K562 (cell line): ENCODE measurements at regions of chr12 and their contacts with region 1.

Region 1: GRCh38 chr12:54337280-54337842 is 12.4 kb downstream of the COPZ1 start:
- DNase-seq: peak; percentile 34 to 88 (median 60)
- ATAC-seq: peak; percentile 86
- H3K4me3 ChIP-seq: 0 out of 2 replicates have a peak overlapping the region, but pooled peaks have one; percentile 2
- H3K27ac ChIP-seq: peak overlapping the region; percentile 74
- H3K4me1 ChIP-seq: peaks cover 34 to 39% of the 10 kb centered on the region in 2 experiments
- H3K27me3 ChIP-seq: no peaks in the 10 kb centered on the region
- CTCF ChIP-seq: peak; percentile 42 to 71 (median 67); a peak in 4 of 6 replicates
- EP300 ChIP-seq: peak; percentile 88; the same call in 1 of the 2 replicates
- POLR2A ChIP-seq: peak; percentile 41
- RAD21 ChIP-seq: peak; percentile 67 to 78

Region 2: DNA sequence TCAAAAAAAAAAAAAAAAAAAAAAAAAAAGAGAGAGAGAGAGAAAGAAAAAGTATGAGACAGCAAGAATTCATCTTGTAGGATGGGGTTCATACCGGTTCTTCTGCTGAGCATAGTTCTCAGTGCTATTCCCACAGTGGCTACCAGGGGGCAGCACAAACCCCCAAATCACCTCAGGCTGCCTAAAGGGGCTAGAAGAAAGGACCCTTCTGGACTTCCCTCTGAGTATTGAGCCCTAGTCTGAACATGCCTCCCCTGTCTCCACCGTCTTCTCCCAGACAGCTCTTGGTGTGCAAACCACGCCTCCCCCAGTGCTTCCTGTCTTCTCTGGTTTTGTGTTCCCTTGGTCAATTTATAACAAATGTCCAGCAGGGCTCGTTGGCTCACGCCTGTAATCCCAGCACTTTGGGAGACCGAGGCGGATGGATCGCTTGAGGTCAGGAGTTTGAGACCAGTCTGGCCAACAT is 117.2 kb before region 1 on chr12:
- CTCF ChIA-PET with region 1: no interaction called
- POLR2A ChIA-PET with region 1: no interaction called
- in situ Hi-C with region 1: no loop called
- intact Hi-C with region 1: loop called (anchors 1 kb)
- DNase-seq: peak; percentile 75 to 88 (median 78)
- ATAC-seq: peak; percentile 81
- H3K4me3 ChIP-seq: no peak overlapping the region
- H3K27ac ChIP-seq: peak overlapping the region; percentile 66
- H3K4me1 ChIP-seq: peaks cover 29 to 34% of the 10 kb centered on the region in 2 experiments; a peak in 4 of 5 replicates
- H3K27me3 ChIP-seq: no peaks in the 10 kb centered on the region
- CTCF ChIP-seq: peak; percentile 91 to 94 (median 93)
- EP300 ChIP-seq: no peak
- POLR2A ChIP-seq: no peak
- RAD21 ChIP-seq: peak; percentile 95 to 98

Region 3: GRCh38 chr12:54285150-54286041 is 52.0 kb before region 1 on chr12:
- CTCF ChIA-PET with region 1: no interaction called
- POLR2A ChIA-PET with region 1: interaction called, 103 read pairs
- in situ Hi-C with region 1: no loop called
- intact Hi-C with region 1: no loop called
- DNase-seq: peak in 1 of 4 experiments; percentile 10
- ATAC-seq: peak; percentile 0; the same call in 1 of the 3 replicates
- H3K4me3 ChIP-seq: peak overlapping the region; percentile 71
- H3K27ac ChIP-seq: peak overlapping the region; percentile 75
- H3K4me1 ChIP-seq: peaks cover 22 to 31% of the 10 kb centered on the region in 2 experiments; a peak in 4 of 5 replicates
- H3K27me3 ChIP-seq: no peaks in the 10 kb centered on the region
- CTCF ChIP-seq: peak in 1 of 3 experiments; percentile 33; a peak in 2 of 6 replicates
- EP300 ChIP-seq: no peak
- POLR2A ChIP-seq: peak; percentile 12
- RAD21 ChIP-seq: peak; percentile 20 to 29; a peak in 2 of 4 replicates

Region 4: DNA sequence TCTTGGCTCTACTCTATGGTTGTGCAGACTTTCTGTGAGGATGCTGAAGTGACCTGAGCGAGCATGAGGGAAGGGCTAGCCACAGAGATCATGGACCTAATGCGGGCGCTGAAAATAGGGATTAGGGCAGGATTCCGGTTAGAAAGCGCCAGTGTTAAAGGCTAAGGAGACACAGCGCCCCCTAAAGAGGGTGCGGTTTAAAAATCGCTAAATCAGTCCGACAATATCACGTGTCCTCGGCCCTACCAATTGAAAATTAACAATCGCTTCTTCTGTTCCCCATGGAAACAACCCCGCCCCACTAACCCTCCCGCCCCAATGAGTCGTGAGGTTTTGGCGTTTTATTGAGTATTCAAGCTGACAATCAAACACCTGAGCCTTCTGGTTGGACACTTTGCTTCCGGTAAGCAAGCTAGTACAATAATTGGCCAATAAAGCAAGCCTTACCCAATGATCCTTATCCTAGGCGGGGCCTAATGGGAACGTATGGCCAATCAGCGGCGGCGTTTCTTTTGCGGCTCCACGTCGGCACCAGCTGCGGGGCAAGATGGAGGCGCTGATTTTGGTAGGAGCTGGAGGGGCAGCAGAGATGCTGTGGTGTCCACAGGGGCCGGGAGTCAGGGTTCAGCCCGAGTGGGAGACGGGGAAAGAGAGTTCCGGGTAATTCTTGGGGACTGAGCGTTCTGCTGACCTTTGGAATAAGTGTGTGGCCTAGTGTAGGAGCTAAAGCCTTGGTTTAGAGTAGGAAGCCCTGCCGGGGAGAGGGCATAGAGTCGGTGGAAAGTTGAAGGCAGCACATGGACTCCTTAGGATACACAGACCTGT is 12.5 kb before region 1 on chr12 and contains the start of gene COPZ1:
- CTCF ChIA-PET with region 1: no interaction called
- POLR2A ChIA-PET with region 1: interaction called, 71 read pairs
- in situ Hi-C with region 1: no loop called
- intact Hi-C with region 1: no loop called
- DNase-seq: peak; percentile 89 to 99 (median 93)
- ATAC-seq: peak; percentile 90
- H3K4me3 ChIP-seq: peak within 1 kb of the TSS; percentile 70
- H3K27ac ChIP-seq: peak within 1 kb of the TSS; percentile 96
- H3K4me1 ChIP-seq: peaks cover 31 to 44% of the 10 kb centered on the region in 2 experiments; a peak in 4 of 5 replicates
- H3K27me3 ChIP-seq: no peaks in the 10 kb centered on the region
- CTCF ChIP-seq: peak; percentile 84 to 98 (median 87)
- EP300 ChIP-seq: peak; percentile 67
- POLR2A ChIP-seq: peak; percentile 97
- RAD21 ChIP-seq: peak; percentile 91 to 94
- polyA plus RNA-seq, gene COPZ1: 437 to 487 TPM

Region 5: DNA sequence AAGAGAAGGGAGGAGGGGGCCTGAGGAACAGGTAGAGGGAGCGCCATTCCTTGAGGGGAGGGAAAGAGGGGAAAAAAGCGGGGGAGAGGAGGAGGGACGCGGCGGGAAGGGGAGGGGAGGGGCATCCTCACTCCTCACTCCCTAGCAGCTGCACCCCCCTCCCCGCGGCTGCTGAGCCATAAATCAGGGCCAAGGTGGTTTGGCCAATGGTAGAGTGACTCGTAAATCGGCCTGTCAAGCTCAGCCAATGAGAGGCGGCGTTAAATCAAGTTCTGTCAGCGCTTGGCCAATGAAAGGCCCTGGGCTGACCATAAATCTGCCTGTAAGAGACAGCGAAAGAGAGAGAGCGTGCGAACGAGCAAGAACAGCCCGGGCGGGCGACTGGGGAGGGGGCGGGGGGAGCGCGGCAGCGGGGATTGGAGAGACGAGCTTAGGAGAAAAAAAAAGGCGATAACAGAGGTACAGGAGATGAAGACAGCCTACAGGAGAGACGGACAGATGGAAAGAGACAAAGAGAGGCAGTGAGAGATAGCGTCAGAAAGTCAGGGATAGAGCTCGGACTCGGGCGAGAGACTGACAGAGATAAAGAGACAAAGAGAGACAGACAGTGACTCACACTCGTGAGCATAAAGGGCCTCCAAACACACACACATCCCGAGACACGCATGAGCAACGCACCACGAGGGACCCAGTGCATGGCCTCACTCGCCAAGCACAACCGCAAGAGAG is 21.8 kb after region 1 on chr12:
- CTCF ChIA-PET with region 1: interaction called, 14 read pairs
- POLR2A ChIA-PET with region 1: interaction called, 34 read pairs
- in situ Hi-C with region 1: no loop called
- intact Hi-C with region 1: loop called (anchors 1 kb)
- DNase-seq: peak; percentile 98 to 100 (median 99)
- ATAC-seq: peak; percentile 88
- H3K4me3 ChIP-seq: peak overlapping the region; percentile 53
- H3K27ac ChIP-seq: peak overlapping the region; percentile 90
- H3K4me1 ChIP-seq: peaks cover 34 to 43% of the 10 kb centered on the region in 2 experiments
- H3K27me3 ChIP-seq: no peaks in the 10 kb centered on the region
- CTCF ChIP-seq: peak in 1 of 3 experiments; percentile 2; a peak in 1 of 6 replicates
- EP300 ChIP-seq: peak; percentile 98
- POLR2A ChIP-seq: peak; percentile 70
- RAD21 ChIP-seq: peak in 1 of 2 experiments; percentile 57; a peak in 3 of 4 replicates

Region 6: DNA sequence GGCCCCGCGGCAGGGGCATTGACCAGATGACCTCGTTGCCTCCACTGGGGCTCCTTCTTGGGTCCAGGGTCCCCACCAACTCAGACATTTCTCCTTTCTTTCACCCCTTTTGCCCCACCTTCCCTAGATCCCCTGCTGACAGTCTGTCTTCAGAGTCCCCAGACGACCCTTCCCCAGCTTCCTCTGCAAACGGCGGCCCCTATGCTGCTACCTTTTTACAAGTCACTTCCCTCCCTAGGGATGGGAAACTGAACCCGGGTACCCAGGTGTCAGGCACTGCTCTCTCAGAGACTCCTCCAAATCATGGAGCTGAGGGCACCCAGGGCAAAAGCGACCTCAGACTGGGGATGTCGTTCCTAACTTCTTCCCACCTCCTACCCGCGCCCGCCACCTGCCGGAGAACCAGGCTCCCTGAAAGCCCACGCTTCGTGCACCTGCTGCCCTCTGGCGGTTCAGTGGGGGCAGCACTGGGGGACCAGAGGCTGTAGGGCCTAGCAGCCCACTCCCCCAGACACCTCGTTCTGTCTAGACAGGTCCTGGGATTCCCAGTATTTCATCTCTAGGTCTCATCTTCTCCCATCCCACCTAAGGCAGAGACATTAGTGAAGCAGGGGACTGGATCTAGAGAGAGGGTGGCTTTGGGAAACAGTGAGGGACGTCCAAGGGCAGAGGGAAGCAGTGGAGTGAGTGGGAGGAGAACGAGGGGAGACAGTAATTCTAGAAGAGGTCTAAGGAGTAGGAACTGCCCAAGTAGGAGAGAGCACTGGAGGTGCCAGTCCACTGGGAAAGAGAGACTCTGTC is 42.2 kb after region 1 on chr12:
- CTCF ChIA-PET with region 1: interaction called, 16 read pairs
- POLR2A ChIA-PET with region 1: interaction called, 3 read pairs
- in situ Hi-C with region 1: no loop called
- intact Hi-C with region 1: no loop called
- DNase-seq: peak; percentile 85 to 95 (median 90)
- ATAC-seq: peak; percentile 93
- H3K4me3 ChIP-seq: peak overlapping the region; percentile 36; the same call in 1 of the 2 replicates
- H3K27ac ChIP-seq: peak overlapping the region; percentile 29; the same call in 2 of the 3 replicates
- H3K4me1 ChIP-seq: peaks cover 43 to 49% of the 10 kb centered on the region in 2 experiments
- H3K27me3 ChIP-seq: no peaks in the 10 kb centered on the region
- CTCF ChIP-seq: peak; percentile 100
- EP300 ChIP-seq: peak; percentile 59
- POLR2A ChIP-seq: no peak
- RAD21 ChIP-seq: peak; percentile 89 to 96

Region 7: DNA sequence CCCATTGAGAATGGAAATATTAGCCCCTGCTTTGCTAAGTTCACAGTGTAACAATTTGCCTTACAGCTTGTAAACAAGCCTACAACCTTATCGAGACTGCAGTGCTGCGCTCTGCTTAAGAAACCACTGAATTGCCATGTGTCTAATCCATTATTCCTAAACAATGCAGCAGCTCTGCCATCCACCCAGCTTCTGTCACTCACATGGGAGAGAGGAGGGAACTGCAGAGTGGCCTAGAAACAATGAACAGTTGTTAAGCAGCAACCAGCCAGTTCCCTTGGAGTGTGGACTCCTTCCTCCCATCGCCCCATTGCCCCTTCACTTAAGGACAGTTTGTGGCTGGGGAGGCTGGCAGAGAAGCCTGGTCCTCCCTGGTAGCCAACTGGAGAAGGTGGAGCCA is 604.3 kb after region 1 on chr12:
- CTCF ChIA-PET with region 1: no interaction called
- POLR2A ChIA-PET with region 1: no interaction called
- in situ Hi-C with region 1: no loop called
- intact Hi-C with region 1: no loop called
- DNase-seq: no peak
- ATAC-seq: no peak
- H3K4me3 ChIP-seq: no peak overlapping the region
- H3K27ac ChIP-seq: no peak overlapping the region
- H3K4me1 ChIP-seq: no peaks in the 10 kb centered on the region; a peak in 1 of 5 replicates
- H3K27me3 ChIP-seq: no peaks in the 10 kb centered on the region; a peak in 1 of 5 replicates
- CTCF ChIP-seq: no peak
- EP300 ChIP-seq: no peak
- POLR2A ChIP-seq: no peak
- RAD21 ChIP-seq: no peak